ENCODE measurements at regions of chr13 and their contacts with region 1.

Region 1: DNA sequence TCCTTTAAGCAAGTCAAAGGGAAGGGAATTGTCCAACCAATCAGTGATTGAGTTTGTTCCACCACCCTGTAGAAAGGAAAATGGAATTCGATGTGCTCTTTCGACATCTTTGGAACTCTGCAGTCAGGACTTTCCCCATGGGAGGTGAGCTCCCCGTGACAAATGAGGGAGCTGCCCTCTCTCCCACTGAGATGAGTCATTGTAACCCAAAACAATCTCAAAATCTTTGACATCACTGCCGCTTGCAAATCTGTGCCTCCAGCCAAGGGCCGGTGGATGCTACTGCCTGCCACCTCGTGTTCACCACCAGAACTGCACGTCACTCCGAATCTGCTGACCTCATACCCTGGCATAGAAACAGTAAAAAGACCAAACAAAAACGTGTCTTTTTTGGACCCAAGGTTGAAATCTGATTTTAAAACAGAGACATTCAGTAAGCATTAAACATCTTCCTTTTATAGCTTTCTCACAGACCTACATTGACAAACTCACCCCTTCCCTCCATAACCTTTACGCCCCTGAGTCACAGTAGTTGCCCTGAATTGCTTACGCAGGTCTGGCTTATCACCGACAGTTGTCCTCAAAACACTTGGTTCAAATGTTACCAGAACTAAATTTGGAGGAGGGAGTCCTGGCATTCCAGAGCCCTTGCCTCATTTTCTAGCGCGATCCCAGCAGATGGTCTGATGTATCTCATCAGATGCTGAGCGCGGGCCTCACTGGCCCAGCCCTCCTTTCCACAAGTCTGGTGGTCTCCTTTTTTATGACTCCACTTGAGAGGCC is 105.2 kb downstream of the COL4A2 start:
- DNase-seq: peak; percentile 86 to 94 (median 93)
- ATAC-seq: peak; percentile 86
- H3K4me3 ChIP-seq: no peak overlapping the region
- H3K27ac ChIP-seq: peak overlapping the region; percentile 98
- H3K4me1 ChIP-seq: peaks cover 45% of the 10 kb centered on the region
- H3K27me3 ChIP-seq: no peaks in the 10 kb centered on the region

Region 2: DNA sequence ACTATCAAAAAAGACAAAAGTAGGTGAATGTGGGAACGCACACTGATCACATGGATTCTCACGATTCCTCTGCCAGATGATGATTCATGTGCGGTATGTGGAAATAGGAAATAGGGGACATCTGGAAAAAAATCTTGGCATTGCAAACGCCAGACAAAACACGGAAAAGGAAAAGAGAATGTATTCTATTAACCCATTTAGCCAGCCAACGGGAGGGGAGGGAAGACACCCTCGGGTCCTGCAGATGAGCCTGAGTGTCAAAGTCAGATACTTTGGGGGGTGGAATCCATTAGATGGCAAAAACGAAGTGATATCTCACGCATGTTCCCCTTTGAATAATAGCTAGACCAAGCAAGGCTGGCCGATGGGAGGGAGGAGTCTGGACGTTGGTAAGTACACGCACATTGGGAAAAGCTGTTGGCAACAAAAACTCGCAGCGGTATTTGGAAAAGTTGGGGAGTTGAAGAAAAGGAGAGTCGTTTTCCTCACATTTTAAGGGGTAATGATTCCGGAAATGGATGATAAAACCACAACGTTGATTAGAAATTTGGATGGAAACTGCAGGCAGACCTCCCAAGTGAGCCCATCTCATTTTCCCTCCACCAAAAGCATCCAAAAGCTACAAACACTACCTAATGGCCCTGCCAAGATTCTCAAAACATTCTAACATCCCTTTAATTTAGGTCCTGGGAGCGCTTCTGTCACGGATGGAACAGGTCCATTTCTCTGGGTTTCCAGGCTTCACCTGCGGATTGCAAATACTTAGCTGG is 179.0 kb before region 1 on chr13:
- intact Hi-C with region 1: loop called (anchors 5 to 10 kb)
- DNase-seq: peak; percentile 70 to 87 (median 78)
- ATAC-seq: peak; percentile 67 to 69
- H3K4me3 ChIP-seq: peak overlapping the region; percentile 2
- H3K27ac ChIP-seq: peak overlapping the region; percentile 68
- H3K4me1 ChIP-seq: peaks cover 30% of the 10 kb centered on the region
- H3K27me3 ChIP-seq: no peaks in the 10 kb centered on the region

Region 3: GRCh38 chr13:110340812-110341444 is 71.4 kb before region 1 on chr13:
- intact Hi-C with region 1: loop called in 1 of 4 experiments (anchors 10 kb)
- DNase-seq: peak; percentile 93 to 96 (median 96)
- ATAC-seq: peak; percentile 73 to 89
- H3K4me3 ChIP-seq: peak overlapping the region; percentile 15
- H3K27ac ChIP-seq: peak overlapping the region; percentile 98
- H3K4me1 ChIP-seq: peaks cover 34% of the 10 kb centered on the region
- H3K27me3 ChIP-seq: no peaks in the 10 kb centered on the region

Measured in right cardiac atrium (tissue), 5 donors.